PC-9 (cell line): ENCODE measurements at regions of chr10 and their contacts with region 1.

Region 1: DNA sequence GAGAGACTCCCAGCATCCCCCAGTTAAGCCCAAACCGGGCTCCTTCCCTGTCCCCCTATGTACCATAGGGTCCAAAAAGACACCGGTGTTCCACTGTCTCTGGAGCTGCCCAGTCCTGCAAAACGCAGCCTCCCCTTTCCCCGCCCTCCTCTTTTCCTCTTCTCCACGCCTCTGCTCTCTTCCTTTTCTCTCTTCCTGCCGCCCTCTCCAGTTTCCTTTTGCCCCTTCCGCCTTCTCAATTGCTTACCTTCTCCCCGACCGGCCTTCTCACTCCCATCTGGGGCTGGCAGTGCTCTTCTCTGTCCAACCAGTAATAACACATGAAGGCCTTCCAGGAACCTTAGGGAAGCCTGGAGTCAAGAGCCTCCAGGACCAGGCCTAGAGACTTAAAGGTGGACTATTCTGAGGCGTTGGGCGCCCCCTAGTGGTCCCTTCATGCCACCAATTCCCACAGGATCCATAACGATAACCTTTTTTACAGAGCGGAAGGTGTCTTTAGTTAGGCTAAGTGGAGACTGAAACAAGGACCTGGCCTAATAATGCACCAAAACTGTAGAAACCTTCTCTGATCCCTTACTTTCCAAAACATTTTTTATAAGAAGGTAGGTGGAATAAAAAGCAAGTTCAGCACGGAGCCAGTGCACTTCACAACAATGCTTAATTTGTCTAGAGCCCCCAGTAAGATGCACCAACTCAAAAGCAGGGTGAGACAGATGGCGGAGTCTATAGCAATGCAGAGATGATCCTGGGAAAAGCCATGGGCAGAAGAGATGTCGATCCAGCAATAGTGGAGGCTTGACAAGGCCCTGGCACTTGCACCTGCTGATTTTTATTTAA is 27.2 kb upstream of the MSRB2 start:
- DNase-seq: peak; percentile 43 to 59
- H3K4me3 ChIP-seq: no peak overlapping the region
- H3K27ac ChIP-seq: no peak overlapping the region
- H3K4me1 ChIP-seq: no peaks in the 10 kb centered on the region
- H3K27me3 ChIP-seq: no peaks in the 10 kb centered on the region
- CTCF ChIP-seq: peak; percentile 84

Region 2: DNA sequence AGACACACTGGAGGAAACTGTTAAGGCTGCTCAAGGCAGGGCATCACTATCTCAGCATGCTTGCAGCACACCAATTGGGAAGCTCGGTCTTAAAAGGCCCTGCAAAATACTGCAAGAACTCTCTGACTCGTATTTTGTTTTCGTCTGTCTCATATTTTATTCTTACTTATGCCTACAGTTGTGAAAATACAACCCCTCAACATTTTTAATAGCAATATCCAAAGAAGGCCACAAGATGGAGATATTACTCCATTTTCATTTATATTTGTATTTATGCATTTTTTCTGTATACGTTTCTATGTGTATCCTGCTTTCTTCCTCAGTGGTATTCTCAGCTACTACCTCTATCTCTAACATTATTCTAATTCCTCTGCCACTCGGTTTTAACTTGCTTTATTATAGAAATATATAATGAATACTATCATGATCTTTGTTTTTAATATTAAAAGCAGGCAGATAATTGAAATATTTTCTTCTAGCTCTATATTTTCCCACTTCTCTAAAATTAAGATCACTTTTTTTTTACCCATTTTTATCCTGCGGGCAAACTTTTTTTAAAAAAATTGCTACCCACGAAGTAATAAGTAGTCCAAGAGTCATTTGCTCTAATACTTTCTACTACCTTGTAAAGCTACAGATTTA is 1074.7 kb before region 1 on chr10:
- CTCF ChIA-PET with region 1: interaction called, 3 read pairs
- POLR2A ChIA-PET with region 1: no interaction called
- intact Hi-C with region 1: loop called (anchors 1 kb)
- DNase-seq: no peak
- H3K4me3 ChIP-seq: no peak overlapping the region
- H3K27ac ChIP-seq: no peak overlapping the region
- H3K4me1 ChIP-seq: no peaks in the 10 kb centered on the region
- H3K27me3 ChIP-seq: no peaks in the 10 kb centered on the region
- CTCF ChIP-seq: peak; percentile 82

Region 3: DNA sequence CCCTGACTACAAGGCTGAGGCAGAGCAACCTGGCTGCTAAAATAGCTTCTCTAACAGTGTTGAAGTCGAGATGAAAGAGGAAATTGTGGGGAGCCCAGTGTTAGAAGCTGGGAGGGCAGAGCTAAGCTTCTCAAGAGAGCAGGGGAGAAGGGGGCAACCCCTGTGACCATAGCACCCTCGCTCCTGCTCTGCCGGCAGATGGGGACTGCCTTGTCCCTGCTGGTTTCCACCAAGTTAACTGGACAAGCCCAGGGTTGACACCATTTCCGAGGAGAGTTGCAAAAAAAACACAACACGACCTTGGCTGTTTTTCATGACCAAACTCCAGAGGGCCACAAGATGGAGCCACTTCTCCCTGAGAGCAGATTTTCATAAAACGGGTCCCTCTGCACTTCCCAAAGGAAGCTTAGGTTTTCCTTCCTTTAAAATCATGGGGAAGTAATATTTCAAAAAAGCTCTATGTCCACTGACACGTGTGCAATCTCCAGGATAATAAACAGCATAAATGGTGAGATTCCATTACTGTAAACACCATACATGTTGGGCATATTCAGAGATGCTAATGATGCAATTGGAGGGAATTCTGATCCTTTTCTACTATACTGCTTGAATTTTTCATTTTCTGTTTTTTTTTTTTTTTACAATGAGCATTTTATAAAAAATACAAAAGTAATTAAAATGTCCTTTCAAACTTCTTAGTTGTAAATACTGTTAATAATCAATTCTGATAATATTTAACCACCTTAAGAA is 494.2 kb before region 1 on chr10:
- CTCF ChIA-PET with region 1: no interaction called
- POLR2A ChIA-PET with region 1: interaction called, 4 read pairs
- intact Hi-C with region 1: loop called (anchors 1 kb)
- DNase-seq: no peak
- H3K4me3 ChIP-seq: no peak overlapping the region
- H3K27ac ChIP-seq: no peak overlapping the region
- H3K4me1 ChIP-seq: no peaks in the 10 kb centered on the region
- H3K27me3 ChIP-seq: no peaks in the 10 kb centered on the region
- CTCF ChIP-seq: peak; percentile 59